Tibial artery (tissue), 4 donors: ENCODE measurements at regions of chr1 and their contacts with region 1.

Region 1: GRCh38 chr1:39609618-39610331 is 29.7 kb downstream of the HEYL start:
- DNase-seq: peak in 1 of 2 donors; percentile 73
- H3K4me3 ChIP-seq: peak overlapping the region in 1 of 2 donors; percentile 9
- H3K27ac ChIP-seq: peak overlapping the region in 1 of 2 donors; percentile 50
- H3K4me1 ChIP-seq: peaks cover 0 to 12% (median 9%) of the 10 kb centered on the region in 4 donors
- H3K27me3 ChIP-seq: no peaks in the 10 kb centered on the region
- CTCF ChIP-seq: peak; percentile 73 to 78

Region 2: DNA sequence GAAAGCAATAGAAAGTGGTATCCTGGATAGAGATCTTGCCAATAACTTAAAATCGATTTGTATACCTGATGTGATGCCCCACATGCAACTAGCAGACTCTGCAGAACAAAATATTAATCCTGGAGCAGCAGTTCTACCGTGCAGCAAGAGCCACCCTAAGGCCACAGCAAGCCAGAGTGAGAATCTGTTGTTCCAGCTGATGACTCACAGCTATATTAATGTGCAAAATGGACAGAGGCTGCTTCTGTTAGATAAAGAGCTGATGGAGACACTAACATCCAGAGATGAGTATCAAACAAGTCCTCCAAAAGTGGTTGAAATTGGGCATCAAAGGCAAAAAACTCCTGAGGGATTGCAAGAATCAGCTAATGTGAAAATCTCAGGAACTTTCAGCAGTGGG is 277.5 kb before region 1 on chr1:
- intact Hi-C with region 1: no loop called
- DNase-seq: no peak
- H3K4me3 ChIP-seq: no peak overlapping the region
- H3K27ac ChIP-seq: no peak overlapping the region
- H3K4me1 ChIP-seq: peaks cover 0 to 56% (median 4%) of the 10 kb centered on the region in 4 donors
- H3K27me3 ChIP-seq: no peaks in the 10 kb centered on the region
- CTCF ChIP-seq: no peak

Region 3: DNA sequence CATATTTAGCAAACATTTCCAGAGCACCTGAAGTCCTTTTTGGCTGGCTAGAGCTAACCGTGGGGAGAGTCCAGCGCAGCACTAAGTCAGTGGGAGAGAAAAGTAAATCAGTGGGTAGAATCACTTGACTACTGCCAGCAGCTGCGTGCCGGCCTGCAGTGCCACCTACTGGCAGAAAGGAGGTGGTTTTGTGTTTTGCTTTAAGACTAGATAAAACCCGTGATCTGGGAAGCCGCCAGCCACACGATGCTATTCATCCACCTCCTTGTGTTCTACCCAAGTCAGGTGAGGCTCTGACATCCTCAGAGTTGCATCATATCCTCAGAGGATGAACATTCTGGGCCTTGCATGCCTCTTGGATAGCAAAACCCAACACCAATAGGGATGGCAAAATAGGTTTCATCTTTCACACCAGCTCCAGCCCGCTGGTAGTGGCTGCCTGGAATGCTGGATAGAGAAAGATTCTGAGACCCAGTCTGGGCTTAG is 43.8 kb after region 1 on chr1:
- intact Hi-C with region 1: loop called (anchors 2 kb)
- DNase-seq: peak; percentile 84 to 88
- H3K4me3 ChIP-seq: no peak overlapping the region
- H3K27ac ChIP-seq: peak overlapping the region; percentile 68 to 69
- H3K4me1 ChIP-seq: peaks cover 0 to 28% (median 19%) of the 10 kb centered on the region in 4 donors
- H3K27me3 ChIP-seq: no peaks in the 10 kb centered on the region
- CTCF ChIP-seq: peak; percentile 95 to 98

Region 4: DNA sequence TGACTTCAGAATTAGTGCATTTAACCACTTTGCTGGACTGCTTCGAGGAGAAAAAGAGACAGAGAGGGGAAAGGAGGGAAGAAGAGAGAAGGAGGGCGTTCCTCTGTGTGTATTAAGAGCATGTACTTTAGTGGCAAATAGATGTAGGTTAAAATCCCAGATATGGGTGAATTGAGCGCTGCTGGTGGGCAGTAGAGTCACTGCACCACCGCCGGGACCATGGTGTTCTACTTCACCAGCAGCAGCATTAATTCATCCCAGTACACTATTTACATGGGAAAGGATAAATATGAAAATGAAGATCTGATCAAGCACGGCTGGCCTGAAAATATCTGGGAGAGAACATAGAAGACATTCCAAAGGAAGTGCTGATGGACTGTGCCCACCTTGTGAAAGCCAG is 108.0 kb after region 1 on chr1:
- intact Hi-C with region 1: loop called (anchors 5 kb)
- DNase-seq: no peak
- H3K4me3 ChIP-seq: no peak overlapping the region
- H3K27ac ChIP-seq: no peak overlapping the region
- H3K4me1 ChIP-seq: no peaks in the 10 kb centered on the region
- H3K27me3 ChIP-seq: peaks cover 0 to 11% of the 10 kb centered on the region in 2 donors
- CTCF ChIP-seq: no peak